Activated CD8-positive, alpha-beta T cell treated with anti-CD3 and anti-CD28 coated beads, Interleukin-2, amount 10 ng/mL, durations not matched to agents 7 days and 5 days (primary cell): ENCODE measurements at regions of chr9 and their contacts with region 1.

Region 1: DNA sequence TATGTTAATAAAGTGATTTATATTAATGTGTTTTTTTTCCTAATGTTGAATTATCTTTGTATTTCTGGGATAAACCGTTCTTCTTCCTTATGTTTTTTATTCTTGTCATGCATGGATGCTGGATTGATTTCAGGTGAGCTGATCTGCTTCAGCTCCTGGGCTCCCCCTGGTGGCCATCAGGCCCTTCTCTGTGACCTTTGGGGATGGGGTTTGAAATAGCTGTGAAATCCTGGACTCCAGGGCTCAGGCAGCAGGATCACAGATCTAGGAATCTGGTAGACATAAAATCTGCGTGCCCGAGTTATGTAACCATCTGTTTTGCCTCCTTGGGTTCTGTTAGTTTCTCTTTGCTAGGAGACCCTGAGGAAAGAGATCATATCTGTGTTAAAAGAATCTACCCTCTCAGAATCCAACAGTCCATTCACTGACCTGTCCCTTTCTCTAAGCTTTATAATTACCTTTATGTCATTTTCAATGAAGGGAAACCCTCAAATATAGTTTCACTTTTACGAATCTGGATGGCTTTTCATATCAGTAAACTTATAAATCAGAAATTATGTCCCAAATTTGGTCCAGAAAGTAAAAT is 12.2 kb upstream of the OR13J1 start:
- DNase-seq: peak; percentile 84
- ATAC-seq: peak; percentile 75
- H3K4me3 Mint-ChIP-seq: no peak overlapping the region
- H3K27ac Mint-ChIP-seq: no peak overlapping the region
- H3K4me1 Mint-ChIP-seq: no peaks in the 10 kb centered on the region
- H3K27me3 Mint-ChIP-seq: peaks cover 34% of the 10 kb centered on the region

Region 2: GRCh38 chr9:35657546-35658136 is 224.7 kb before region 1 on chr9 and contains the start of gene RMRP:
- CTCF ChIA-PET with region 1: no interaction called
- POLR2A ChIA-PET with region 1: no interaction called
- DNase-seq: peak; percentile 94
- ATAC-seq: peak; percentile 92
- H3K4me3 Mint-ChIP-seq: peak within 1 kb of the TSS; percentile 92
- H3K27ac Mint-ChIP-seq: peak within 1 kb of the TSS; percentile 97
- H3K4me1 Mint-ChIP-seq: peaks cover 62% of the 10 kb centered on the region
- H3K27me3 Mint-ChIP-seq: peaks cover 3% of the 10 kb centered on the region
- total RNA-seq, gene RMRP: 7,126 to 12,592 TPM

Region 3: DNA sequence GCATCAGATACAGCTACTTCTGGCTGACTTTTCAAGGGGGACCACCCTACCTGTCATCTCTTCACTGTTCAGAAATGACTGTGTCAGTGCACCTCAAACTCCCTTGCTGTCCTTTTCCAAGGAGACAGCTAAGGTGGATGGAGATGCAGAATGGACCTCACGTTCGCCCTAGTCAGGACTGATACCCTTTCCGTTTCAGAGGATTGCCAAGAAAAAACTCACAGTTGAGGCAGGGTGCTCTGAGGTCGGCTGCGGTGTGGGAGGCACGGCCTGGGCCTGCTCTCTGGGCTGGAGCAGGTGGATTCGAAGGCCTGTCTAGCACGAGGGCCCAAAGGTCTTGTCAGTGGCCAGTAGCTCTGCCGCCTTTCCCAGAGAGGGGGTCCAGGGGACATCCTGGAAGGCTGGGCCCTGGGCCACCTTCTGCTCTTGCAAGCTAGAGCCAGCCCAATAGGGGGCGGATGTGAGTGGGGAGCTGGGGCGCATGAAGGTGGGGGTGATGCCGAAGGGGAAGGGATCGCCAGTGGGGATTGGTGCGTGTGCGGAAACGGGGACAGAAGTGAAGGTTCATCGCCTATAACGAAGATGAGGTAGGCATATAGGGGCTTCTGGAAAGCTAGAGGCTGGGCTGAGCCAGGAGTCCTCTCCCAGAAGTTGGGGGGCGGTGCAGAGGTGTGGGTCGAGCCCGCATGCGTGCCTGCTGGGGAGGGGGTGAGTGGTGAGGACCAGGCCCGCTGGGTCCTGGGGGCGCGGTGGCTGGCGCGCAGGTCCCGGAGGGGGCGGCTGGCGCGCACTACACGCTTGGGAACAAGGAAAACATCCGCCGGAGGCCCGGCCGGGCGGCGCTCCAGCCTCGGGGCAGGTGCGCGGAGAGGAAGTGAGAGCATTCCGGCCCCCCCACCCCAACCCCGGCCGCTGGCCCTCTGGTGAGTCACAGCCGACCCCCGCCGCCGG is 125.8 kb before region 1 on chr9:
- CTCF ChIA-PET with region 1: interaction called, 10 read pairs
- POLR2A ChIA-PET with region 1: no interaction called
- DNase-seq: peak; percentile 87
- ATAC-seq: peak; percentile 87
- H3K4me3 Mint-ChIP-seq: peak overlapping the region; percentile 87
- H3K27ac Mint-ChIP-seq: peak overlapping the region; percentile 94
- H3K4me1 Mint-ChIP-seq: peaks cover 35% of the 10 kb centered on the region
- H3K27me3 Mint-ChIP-seq: no peaks in the 10 kb centered on the region

Region 4: GRCh38 chr9:35798658-35799374 is 83.5 kb before region 1 on chr9:
- CTCF ChIA-PET with region 1: interaction called, 17 read pairs
- POLR2A ChIA-PET with region 1: no interaction called
- DNase-seq: peak; percentile 35
- ATAC-seq: no peak
- H3K4me3 Mint-ChIP-seq: no peak overlapping the region
- H3K27ac Mint-ChIP-seq: peak overlapping the region; percentile 8
- H3K4me1 Mint-ChIP-seq: peaks cover 30% of the 10 kb centered on the region
- H3K27me3 Mint-ChIP-seq: no peaks in the 10 kb centered on the region

Region 5: GRCh38 chr9:35826071-35826701 is 56.2 kb before region 1 on chr9:
- CTCF ChIA-PET with region 1: interaction called, 64 read pairs
- POLR2A ChIA-PET with region 1: no interaction called
- DNase-seq: peak; percentile 58
- ATAC-seq: peak; percentile 29
- H3K4me3 Mint-ChIP-seq: no peak overlapping the region
- H3K27ac Mint-ChIP-seq: no peak overlapping the region
- H3K4me1 Mint-ChIP-seq: peaks cover 27% of the 10 kb centered on the region
- H3K27me3 Mint-ChIP-seq: peaks cover 14% of the 10 kb centered on the region

Region 6: DNA sequence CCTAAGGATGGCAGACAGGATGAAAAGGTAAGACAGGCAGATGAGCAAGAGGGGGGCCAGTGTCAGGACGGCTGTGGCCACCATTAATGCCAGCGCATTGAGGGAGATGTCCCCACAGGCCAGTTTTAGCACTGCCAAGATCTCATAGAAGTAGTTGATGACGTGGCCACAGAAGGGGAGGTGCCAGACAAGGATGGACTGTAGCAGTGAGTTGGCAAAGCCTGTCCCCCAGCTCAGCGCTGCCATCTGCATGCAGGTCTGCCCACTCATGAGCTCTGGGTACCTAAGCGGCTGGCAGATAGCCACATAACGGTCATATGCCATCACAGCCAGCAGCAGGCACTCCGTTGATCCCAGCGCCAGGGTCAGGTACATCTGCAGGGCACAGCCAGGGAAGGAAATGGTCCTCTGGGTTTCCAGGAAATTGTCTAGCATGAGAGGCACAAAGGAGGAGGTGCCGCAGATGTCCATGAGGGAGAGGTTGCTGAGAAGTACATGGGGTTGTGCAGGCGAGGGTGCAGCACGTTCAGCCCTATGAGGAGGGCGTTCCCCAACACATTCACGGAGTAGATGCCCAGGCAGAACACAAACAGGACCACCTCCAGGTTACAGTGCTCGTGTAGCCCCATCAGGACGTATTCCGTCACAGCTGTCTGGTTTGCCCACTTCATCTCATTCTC is 22.9 kb before region 1 on chr9:
- CTCF ChIA-PET with region 1: interaction called, 18 read pairs
- POLR2A ChIA-PET with region 1: no interaction called
- DNase-seq: peak; percentile 20
- ATAC-seq: no peak
- H3K4me3 Mint-ChIP-seq: no peak overlapping the region
- H3K27ac Mint-ChIP-seq: no peak overlapping the region
- H3K4me1 Mint-ChIP-seq: no peaks in the 10 kb centered on the region
- H3K27me3 Mint-ChIP-seq: peaks cover 21% of the 10 kb centered on the region

Region 7: GRCh38 chr9:35871497-35871896 is 10.9 kb before region 1 on chr9:
- CTCF ChIA-PET with region 1: interaction called, 14 read pairs
- POLR2A ChIA-PET with region 1: no interaction called
- DNase-seq: no peak
- ATAC-seq: no peak
- H3K4me3 Mint-ChIP-seq: no peak overlapping the region
- H3K27ac Mint-ChIP-seq: no peak overlapping the region
- H3K4me1 Mint-ChIP-seq: no peaks in the 10 kb centered on the region
- H3K27me3 Mint-ChIP-seq: peaks cover 9% of the 10 kb centered on the region

Region 8: GRCh38 chr9:35903049-35903448 is 20.7 kb after region 1 on chr9:
- CTCF ChIA-PET with region 1: interaction called, 32 read pairs
- POLR2A ChIA-PET with region 1: no interaction called
- DNase-seq: peak; percentile 64
- ATAC-seq: peak; percentile 74
- H3K4me3 Mint-ChIP-seq: no peak overlapping the region
- H3K27ac Mint-ChIP-seq: no peak overlapping the region
- H3K4me1 Mint-ChIP-seq: peaks cover 10% of the 10 kb centered on the region
- H3K27me3 Mint-ChIP-seq: peaks cover 10% of the 10 kb centered on the region